GM10248 (cell line): ENCODE measurements at regions of chr14 and their contacts with region 1.

Region 1: DNA sequence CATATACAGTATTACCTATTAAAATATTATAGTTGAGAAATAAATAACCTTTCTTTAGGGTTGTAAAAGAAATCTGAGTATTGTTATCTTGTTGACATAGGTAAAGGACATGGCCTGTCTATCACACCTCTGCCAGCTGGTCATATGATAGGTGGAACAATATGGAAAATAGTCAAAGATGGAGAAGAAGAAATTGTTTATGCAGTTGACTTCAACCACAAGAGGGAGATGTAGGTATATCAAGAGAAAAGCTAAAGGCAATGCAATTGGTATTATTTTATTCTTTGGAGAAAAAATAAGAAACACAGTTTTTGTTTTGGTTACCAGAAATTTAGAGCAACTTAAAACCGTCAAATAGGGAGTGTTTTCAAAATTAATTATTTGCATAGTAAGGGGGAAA is 13.5 kb downstream of the CPSF2 start:
- DNase-seq: no peak
- CTCF ChIP-seq: peak; percentile 15

Region 2: DNA sequence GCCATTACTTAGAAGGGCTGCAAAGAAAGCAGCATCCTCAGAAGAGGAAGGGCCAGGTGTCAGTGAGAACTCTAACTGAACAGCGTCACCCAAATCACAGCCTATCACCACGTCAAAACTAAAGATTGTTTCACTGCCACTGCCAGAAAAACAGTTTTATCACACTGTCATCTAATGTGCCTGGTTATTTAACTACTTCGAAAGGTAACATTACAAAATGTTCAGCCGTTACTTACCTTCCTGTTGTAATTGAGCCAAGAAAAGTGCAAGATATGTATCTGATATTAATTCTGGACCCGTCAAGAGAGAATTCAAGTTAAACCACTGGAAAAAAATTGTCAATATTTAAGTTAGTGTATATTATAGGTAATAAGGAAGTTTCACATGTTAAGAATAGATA is 46.8 kb before region 1 on chr14:
- CTCF ChIA-PET with region 1: no interaction called
- POLR2A ChIA-PET with region 1: no interaction called
- DNase-seq: no peak
- CTCF ChIP-seq: no peak

Region 3: DNA sequence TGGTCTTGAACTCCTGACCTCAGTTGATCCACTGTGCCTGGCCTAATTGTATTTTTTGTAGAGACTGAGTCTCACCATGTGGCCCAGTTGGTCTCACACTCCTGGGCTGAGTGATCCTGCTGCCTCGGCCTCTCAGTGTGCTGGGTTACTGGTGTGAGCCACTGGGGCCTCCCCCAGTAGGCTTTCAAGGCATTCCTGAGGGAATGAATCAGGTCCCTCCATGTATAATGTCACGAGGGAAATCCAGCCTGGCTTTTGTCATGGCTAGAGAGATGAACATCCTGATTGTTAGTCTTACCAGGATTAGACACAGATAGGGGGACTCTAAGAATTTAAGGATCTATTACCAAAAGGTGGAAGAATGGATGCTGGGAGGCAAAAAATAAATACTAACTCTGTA is 38.4 kb after region 1 on chr14:
- CTCF ChIA-PET with region 1: no interaction called
- POLR2A ChIA-PET with region 1: no interaction called
- DNase-seq: no peak
- CTCF ChIP-seq: no peak

Region 4: GRCh38 chr14:92352158-92352985 is 217.1 kb after region 1 on chr14:
- CTCF ChIA-PET with region 1: interaction called, 20 read pairs
- POLR2A ChIA-PET with region 1: no interaction called
- DNase-seq: peak; percentile 48
- CTCF ChIP-seq: peak; percentile 33